Heart right ventricle (tissue), 16 donors: ENCODE measurements at regions of chr4 and their contacts with region 1.

Region 1: GRCh38 chr4:183059797-183060196 is 39.3 kb upstream of the WWC2 start:
- DNase-seq: no peak
- ATAC-seq: no peak
- H3K4me3 ChIP-seq: no peak overlapping the region
- H3K27ac ChIP-seq: no peak overlapping the region
- H3K4me1 ChIP-seq: peaks cover 0 to 13% (median 0%) of the 10 kb centered on the region in 9 donors
- H3K27me3 ChIP-seq: no peaks in the 10 kb centered on the region
- CTCF ChIP-seq: no peak

Region 2: DNA sequence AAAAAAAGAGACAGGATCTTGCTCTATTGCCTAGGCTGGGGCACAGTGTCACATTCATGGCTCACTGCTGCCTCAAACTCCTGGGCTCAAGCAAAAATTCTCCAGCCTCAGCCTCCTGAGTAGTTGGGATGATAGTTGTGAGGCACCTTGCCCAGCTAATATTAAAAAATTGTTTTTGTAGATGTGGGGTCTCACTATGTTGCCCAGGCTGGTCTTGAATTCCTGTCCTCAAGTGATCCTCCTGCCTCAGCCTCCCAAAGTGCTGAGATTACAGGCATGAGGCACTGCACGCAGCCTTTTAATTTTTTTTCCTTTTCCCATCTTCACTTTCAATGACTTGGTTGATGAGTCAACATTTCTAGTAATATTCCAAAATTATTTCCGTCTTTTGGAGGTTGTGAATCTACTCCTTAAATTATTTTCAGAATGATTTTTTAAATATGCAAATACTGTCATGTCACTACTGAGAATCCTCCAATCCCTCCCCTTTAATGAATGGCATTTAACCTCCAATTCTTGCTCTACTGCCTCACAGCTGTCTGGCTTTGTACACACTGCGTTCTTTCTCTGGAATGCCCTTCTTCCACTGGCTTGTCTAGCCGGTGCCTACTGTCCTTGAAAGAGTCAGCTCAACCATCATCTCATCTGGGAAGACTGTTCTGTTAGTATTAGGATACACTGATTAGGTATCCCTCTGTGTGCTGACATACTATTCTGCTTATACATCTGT is 115.1 kb before region 1 on chr4:
- intact Hi-C with region 1: loop called in 1 of 10 experiments (anchors 10 kb)
- DNase-seq: no peak
- ATAC-seq: no peak
- H3K4me3 ChIP-seq: no peak overlapping the region
- H3K27ac ChIP-seq: no peak overlapping the region
- H3K4me1 ChIP-seq: no peaks in the 10 kb centered on the region
- H3K27me3 ChIP-seq: peaks cover 0 to 5% (median 3%) of the 10 kb centered on the region in 7 donors
- CTCF ChIP-seq: no peak